ENCODE measurements at regions of chr15 and their contacts with region 1.

Region 1: GRCh38 chr15:58574631-58575030 is 142.8 kb downstream of the LIPC start:
- DNase-seq: no peak
- ATAC-seq: no peak
- H3K4me3 ChIP-seq: no peak overlapping the region
- H3K27ac ChIP-seq: no peak overlapping the region
- H3K4me1 ChIP-seq: no peaks in the 10 kb centered on the region; a peak in 1 of 5 replicates
- H3K27me3 ChIP-seq: no peaks in the 10 kb centered on the region
- CTCF ChIP-seq: no peak
- EP300 ChIP-seq: no peak
- POLR2A ChIP-seq: no peak
- RAD21 ChIP-seq: no peak

Region 2: GRCh38 chr15:57849317-57849716 is 725.3 kb before region 1 on chr15:
- CTCF ChIA-PET with region 1: no interaction called
- POLR2A ChIA-PET with region 1: no interaction called
- in situ Hi-C with region 1: no loop called
- intact Hi-C with region 1: no loop called
- DNase-seq: no peak
- ATAC-seq: no peak
- H3K4me3 ChIP-seq: no peak overlapping the region
- H3K27ac ChIP-seq: no peak overlapping the region
- H3K4me1 ChIP-seq: no peaks in the 10 kb centered on the region
- H3K27me3 ChIP-seq: peaks cover 30 to 32% of the 10 kb centered on the region in 2 experiments
- CTCF ChIP-seq: no peak
- EP300 ChIP-seq: no peak
- POLR2A ChIP-seq: no peak
- RAD21 ChIP-seq: no peak

Region 3: GRCh38 chr15:58585693-58586443 is 11.2 kb after region 1 on chr15:
- CTCF ChIA-PET with region 1: no interaction called
- POLR2A ChIA-PET with region 1: interaction called, 21 read pairs
- in situ Hi-C with region 1: no loop called
- intact Hi-C with region 1: no loop called
- DNase-seq: peak in 1 of 4 experiments; percentile 35
- ATAC-seq: peak; percentile 42
- H3K4me3 ChIP-seq: no peak overlapping the region
- H3K27ac ChIP-seq: no peak overlapping the region
- H3K4me1 ChIP-seq: peaks cover 14 to 28% of the 10 kb centered on the region in 2 experiments; a peak in 4 of 5 replicates
- H3K27me3 ChIP-seq: no peaks in the 10 kb centered on the region
- CTCF ChIP-seq: no peak
- EP300 ChIP-seq: no peak
- POLR2A ChIP-seq: peak; percentile 40; the same call in 1 of the 2 replicates
- RAD21 ChIP-seq: no peak